CD4-positive, alpha-beta T cell (primary cell): ENCODE measurements at regions of chr6 and their contacts with region 1.

Region 1: DNA sequence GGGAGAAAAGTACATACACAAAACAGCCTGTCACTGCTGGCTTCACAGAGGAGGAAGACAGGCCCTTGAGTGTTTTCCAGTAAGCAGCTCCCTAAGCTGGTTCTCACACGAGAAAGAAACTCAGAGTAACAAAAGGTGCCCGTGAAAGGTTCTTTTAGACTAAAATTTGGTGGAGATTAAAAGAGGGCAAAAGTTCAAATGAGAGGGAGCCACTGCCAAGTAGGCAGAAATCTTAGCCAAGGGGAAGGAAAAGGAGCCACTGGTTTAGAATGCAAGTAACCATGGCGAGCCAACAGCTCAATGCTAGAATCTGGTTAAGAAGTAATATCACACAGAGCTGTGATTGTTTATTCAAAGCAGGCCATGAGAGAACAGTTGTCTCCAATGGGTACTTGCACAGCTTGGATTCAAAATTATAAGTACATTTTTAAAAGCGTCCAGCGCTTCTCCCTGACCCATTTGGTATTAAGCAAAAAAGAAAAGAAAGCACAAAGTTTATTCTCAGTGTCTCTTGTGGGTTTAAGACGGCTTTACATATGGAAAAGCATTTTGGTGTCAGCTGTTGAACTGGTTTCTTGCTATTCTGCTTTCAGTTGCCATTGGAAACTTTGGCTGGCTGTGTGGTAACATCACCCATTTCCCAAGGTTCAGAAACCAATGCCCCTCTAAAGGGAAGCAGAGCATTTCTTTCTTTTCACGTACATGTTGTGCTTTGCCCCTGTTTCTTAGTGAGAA is 648.5 kb downstream of the RNF144B start:
- DNase-seq: no peak
- ATAC-seq: no peak
- H3K4me3 ChIP-seq: no peak overlapping the region
- H3K4me3 Mint-ChIP-seq: no peak overlapping the region
- H3K27ac ChIP-seq: no peak overlapping the region
- H3K27ac Mint-ChIP-seq: no peak overlapping the region
- H3K4me1 ChIP-seq: no peaks in the 10 kb centered on the region
- H3K4me1 Mint-ChIP-seq: no peaks in the 10 kb centered on the region
- H3K27me3 ChIP-seq: no peaks in the 10 kb centered on the region
- H3K27me3 Mint-ChIP-seq: no peaks in the 10 kb centered on the region
- CTCF ChIP-seq: no peak

Region 2: DNA sequence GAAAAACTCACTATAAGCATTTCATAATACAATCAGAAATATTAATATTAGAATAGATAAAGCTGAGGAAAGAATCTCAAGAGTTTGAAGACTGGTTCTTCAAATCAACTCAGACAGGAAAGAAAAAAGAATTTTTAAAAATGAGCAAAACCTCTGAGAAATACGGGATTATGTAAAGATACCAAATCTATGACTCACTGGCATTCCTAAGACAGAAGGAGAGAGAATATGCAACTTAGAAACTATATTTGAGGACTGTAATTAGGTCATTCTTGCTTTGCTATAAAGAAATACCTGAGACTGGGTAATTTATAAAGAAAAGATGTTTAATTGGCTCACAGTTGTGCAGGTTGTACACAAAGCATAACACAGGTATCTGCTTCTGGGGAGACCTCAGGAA is 16.6 kb after region 1 on chr6:
- CTCF ChIA-PET with region 1: interaction called, 3 read pairs
- POLR2A ChIA-PET with region 1: no interaction called
- intact Hi-C with region 1: loop called in 1 of 2 experiments (anchors 1 kb)
- DNase-seq: no peak
- ATAC-seq: no peak
- H3K4me3 ChIP-seq: no peak overlapping the region
- H3K4me3 Mint-ChIP-seq: no peak overlapping the region
- H3K27ac ChIP-seq: no peak overlapping the region
- H3K27ac Mint-ChIP-seq: no peak overlapping the region
- H3K4me1 ChIP-seq: no peaks in the 10 kb centered on the region
- H3K4me1 Mint-ChIP-seq: no peaks in the 10 kb centered on the region
- H3K27me3 ChIP-seq: peaks cover 0 to 3% of the 10 kb centered on the region in 2 experiments
- H3K27me3 Mint-ChIP-seq: no peaks in the 10 kb centered on the region
- CTCF ChIP-seq: no peak

Region 3: GRCh38 chr6:19356692-19357091 is 321.1 kb after region 1 on chr6:
- CTCF ChIA-PET with region 1: no interaction called
- POLR2A ChIA-PET with region 1: no interaction called
- intact Hi-C with region 1: no loop called
- DNase-seq: no peak
- ATAC-seq: no peak
- H3K4me3 ChIP-seq: no peak overlapping the region
- H3K4me3 Mint-ChIP-seq: no peak overlapping the region
- H3K27ac ChIP-seq: no peak overlapping the region
- H3K27ac Mint-ChIP-seq: no peak overlapping the region
- H3K4me1 ChIP-seq: no peaks in the 10 kb centered on the region
- H3K4me1 Mint-ChIP-seq: no peaks in the 10 kb centered on the region
- H3K27me3 ChIP-seq: no peaks in the 10 kb centered on the region
- H3K27me3 Mint-ChIP-seq: no peaks in the 10 kb centered on the region
- CTCF ChIP-seq: no peak